H1 (cell line): ENCODE measurements at regions of chr10 and their contacts with region 1.

Region 1: GRCh38 chr10:5466418-5467154 is 32.8 kb downstream of the CALML5 start:
- DNase-seq: peak; percentile 71 to 72
- H3K4me3 ChIP-seq: peak overlapping the region in 1 of 4 experiments; percentile 23; a peak in 1 of 8 replicates
- H3K27ac ChIP-seq: peak overlapping the region; percentile 82
- H3K4me1 ChIP-seq: peaks cover 8 to 18% (median 14%) of the 10 kb centered on the region in 4 experiments
- H3K27me3 ChIP-seq: peaks cover 0 to 4% (median 0%) of the 10 kb centered on the region in 4 experiments; a peak in 1 of 7 replicates
- CTCF ChIP-seq: no peak
- EP300 ChIP-seq: no peak
- POLR2A ChIP-seq: peak in 1 of 2 experiments; percentile 53; a peak in 1 of 3 replicates
- RAD21 ChIP-seq: peak; percentile 16 to 29; a peak in 1 of 4 replicates

Region 2: GRCh38 chr10:5385224-5385623 is 81.4 kb before region 1 on chr10:
- CTCF ChIA-PET with region 1: no interaction called
- POLR2A ChIA-PET with region 1: no interaction called
- DNase-seq: peak; percentile 15 to 44
- H3K4me3 ChIP-seq: no peak overlapping the region
- H3K27ac ChIP-seq: no peak overlapping the region
- H3K4me1 ChIP-seq: no peaks in the 10 kb centered on the region; a peak in 1 of 7 replicates
- H3K27me3 ChIP-seq: no peaks in the 10 kb centered on the region
- CTCF ChIP-seq: no peak
- EP300 ChIP-seq: no peak
- POLR2A ChIP-seq: no peak
- RAD21 ChIP-seq: no peak

Region 3: DNA sequence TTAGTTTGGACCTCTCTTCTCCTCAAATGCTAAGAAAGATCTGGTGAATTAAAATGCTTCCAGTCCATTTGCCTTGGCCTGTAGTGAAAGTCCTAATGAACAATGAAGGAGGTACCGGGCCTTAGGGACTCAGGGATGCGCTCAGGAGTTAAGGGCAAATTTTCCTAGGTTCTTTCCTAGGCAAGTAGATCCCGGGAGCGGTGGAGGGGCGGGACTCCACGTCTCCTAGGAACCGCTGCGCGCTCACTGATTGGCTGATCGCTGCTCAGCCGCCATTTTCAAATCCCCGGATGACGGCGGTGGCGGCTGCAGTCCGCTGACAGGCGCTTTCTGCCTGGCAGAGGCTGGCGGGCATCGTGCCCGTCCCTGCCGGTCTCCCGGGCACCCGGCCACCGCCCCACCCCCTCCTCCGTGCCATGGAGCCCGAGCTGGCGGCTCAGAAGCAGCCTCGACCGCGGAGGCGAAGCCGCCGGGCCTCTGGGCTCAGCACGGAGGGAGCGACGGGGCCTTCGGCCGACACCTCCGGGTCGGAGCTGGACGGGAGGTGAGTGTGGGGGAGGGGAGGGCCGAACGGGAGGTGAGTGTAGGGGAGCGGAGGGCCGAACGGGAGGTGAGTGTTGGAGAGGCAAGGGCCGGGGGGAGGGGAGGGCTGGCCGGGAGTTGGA is 54.2 kb before region 1 on chr10 and contains the start of gene NET1:
- CTCF ChIA-PET with region 1: no interaction called
- POLR2A ChIA-PET with region 1: no interaction called
- DNase-seq: peak; percentile 83 to 95
- H3K4me3 ChIP-seq: peak within 1 kb of the TSS; percentile 63 to 97 (median 74)
- H3K27ac ChIP-seq: peak within 1 kb of the TSS; percentile 76; the same call in 1 of the 2 replicates
- H3K4me1 ChIP-seq: peaks cover 4 to 14% (median 7%) of the 10 kb centered on the region in 4 experiments
- H3K27me3 ChIP-seq: no peaks in the 10 kb centered on the region
- CTCF ChIP-seq: no peak
- EP300 ChIP-seq: no peak
- POLR2A ChIP-seq: peak; percentile 43 to 53
- RAD21 ChIP-seq: no peak
- total RNA-seq, gene NET1: 109 and 117 TPM in 2 replicates

Region 4: GRCh38 chr10:5479481-5480161 is 13.0 kb after region 1 on chr10:
- CTCF ChIA-PET with region 1: interaction called, 18 read pairs
- POLR2A ChIA-PET with region 1: interaction called, 44 read pairs
- DNase-seq: no peak
- H3K4me3 ChIP-seq: no peak overlapping the region
- H3K27ac ChIP-seq: no peak overlapping the region
- H3K4me1 ChIP-seq: peaks cover 3 to 14% (median 8%) of the 10 kb centered on the region in 4 experiments
- H3K27me3 ChIP-seq: no peaks in the 10 kb centered on the region
- CTCF ChIP-seq: no peak
- EP300 ChIP-seq: no peak
- POLR2A ChIP-seq: no peak
- RAD21 ChIP-seq: no peak